Activated naive CD4-positive, alpha-beta T cell treated with anti-CD3 and anti-CD28 coated beads for 36 hours (primary cell): ENCODE measurements at regions of chr6 and their contacts with region 1.

Region 1: DNA sequence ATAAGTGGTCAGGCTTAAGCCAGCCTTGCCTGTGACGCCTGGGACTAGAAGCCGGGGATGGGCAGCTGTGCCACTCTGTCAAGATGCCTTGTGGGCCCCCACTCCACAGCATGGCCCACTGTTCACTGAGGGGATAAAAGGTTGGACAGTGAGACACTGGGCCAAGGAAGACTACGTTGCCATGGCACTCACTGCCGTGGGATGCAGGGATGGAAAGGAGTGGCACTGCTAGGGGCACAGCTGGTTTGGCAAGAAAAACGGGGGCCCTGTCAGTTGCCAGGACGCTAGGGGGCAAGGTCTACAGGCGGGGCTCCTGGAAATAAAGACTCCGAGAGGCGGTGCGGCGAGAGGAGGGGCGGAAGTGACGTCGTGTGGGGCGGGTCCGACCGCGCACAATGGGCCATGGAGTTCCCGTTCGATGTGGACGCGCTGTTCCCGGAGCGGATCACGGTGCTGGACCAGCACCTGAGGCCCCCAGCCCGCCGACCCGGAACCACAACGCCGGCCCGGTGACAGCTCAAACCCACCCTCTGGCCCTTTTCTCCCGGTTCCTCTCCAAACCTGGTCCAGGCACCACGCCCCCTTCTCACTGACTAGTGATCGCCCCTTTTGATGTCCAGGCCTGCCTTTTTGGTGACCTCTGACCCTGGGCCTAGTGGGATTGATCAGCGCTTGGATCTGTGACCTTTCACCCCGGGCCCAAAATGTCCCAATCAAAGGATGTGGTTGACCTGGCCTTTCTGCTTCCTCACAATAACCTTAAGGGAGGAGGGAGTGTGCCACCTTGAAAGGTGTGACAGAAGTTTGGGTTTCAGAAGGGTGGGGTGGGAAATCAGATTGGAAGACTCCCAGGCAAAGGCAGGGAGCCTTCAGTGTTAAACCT is at the start of gene ATAT1:
- DNase-seq: peak; percentile 89
- H3K4me3 Mint-ChIP-seq: peak within 1 kb of the TSS; percentile 96
- H3K27ac Mint-ChIP-seq: peak within 1 kb of the TSS; percentile 93
- H3K4me1 Mint-ChIP-seq: peaks cover 21% of the 10 kb centered on the region
- H3K27me3 Mint-ChIP-seq: no peaks in the 10 kb centered on the region
- total RNA-seq, gene ATAT1: 6.9 to 7.5 TPM

Region 2: GRCh38 chr6:30672445-30673253 is 45.9 kb after region 1 on chr6 and contains the start of gene DHX16:
- CTCF ChIA-PET with region 1: no interaction called
- intact Hi-C with region 1: loop called (anchors 1 kb)
- DNase-seq: peak; percentile 94
- H3K4me3 Mint-ChIP-seq: peak within 1 kb of the TSS; percentile 80
- H3K27ac Mint-ChIP-seq: peak within 1 kb of the TSS; percentile 80
- H3K4me1 Mint-ChIP-seq: peaks cover 26% of the 10 kb centered on the region
- H3K27me3 Mint-ChIP-seq: no peaks in the 10 kb centered on the region
- total RNA-seq, gene DHX16: 25.7 to 27.7 TPM